Naive thymus-derived CD4-positive, alpha-beta T cell (primary cell): ENCODE measurements at regions of chr2 and their contacts with region 1.

Region 1: DNA sequence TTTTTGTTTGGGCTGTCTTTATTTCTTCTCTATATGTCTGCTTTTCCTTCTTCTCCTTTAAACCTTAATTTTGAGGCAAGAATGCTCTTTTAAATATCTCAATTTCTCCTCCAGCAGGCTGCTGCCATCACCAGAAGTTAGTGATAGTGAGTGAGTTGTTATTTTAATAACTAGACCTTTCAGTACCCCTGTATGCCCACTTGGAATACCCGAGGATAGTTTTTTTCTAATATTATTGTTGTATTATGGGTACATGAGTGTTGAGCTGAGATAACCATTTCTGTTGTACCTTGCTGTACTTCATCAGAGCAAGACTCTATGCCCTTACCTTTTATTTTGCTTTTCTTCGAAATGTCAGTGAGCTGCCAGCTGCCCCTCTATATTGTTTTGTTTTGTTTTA is 50.1 kb downstream of the PPM1B start:
- DNase-seq: no peak
- ATAC-seq: no peak
- H3K4me3 ChIP-seq: no peak overlapping the region
- H3K4me3 Mint-ChIP-seq: no peak overlapping the region
- H3K27ac ChIP-seq: no peak overlapping the region
- H3K27ac Mint-ChIP-seq: peak overlapping the region in 7 of 9 donors; percentile 11 to 79 (median 62)
- H3K4me1 ChIP-seq: no peaks in the 10 kb centered on the region
- H3K4me1 Mint-ChIP-seq: peaks cover 7 to 47% (median 28%) of the 10 kb centered on the region in 7 donors
- H3K27me3 ChIP-seq: no peaks in the 10 kb centered on the region
- H3K27me3 Mint-ChIP-seq: no peaks in the 10 kb centered on the region

Region 2: GRCh38 chr2:44201648-44202165 is 17.1 kb before region 1 on chr2:
- CTCF ChIA-PET with region 1: no interaction called
- POLR2A ChIA-PET with region 1: no interaction called
- intact Hi-C with region 1: loop called in 1 of 2 experiments (anchors 2 kb)
- DNase-seq: no peak
- ATAC-seq: no peak
- H3K4me3 ChIP-seq: no peak overlapping the region
- H3K4me3 Mint-ChIP-seq: peak overlapping the region in 6 of 10 donors; percentile 2 to 61 (median 20)
- H3K27ac ChIP-seq: no peak overlapping the region
- H3K27ac Mint-ChIP-seq: peak overlapping the region in 5 of 9 donors; percentile 6 to 76 (median 29)
- H3K4me1 ChIP-seq: peaks cover 0 to 20% of the 10 kb centered on the region in 2 donors
- H3K4me1 Mint-ChIP-seq: peaks cover 28 to 84% (median 76%) of the 10 kb centered on the region in 7 donors
- H3K27me3 ChIP-seq: no peaks in the 10 kb centered on the region
- H3K27me3 Mint-ChIP-seq: no peaks in the 10 kb centered on the region